Left cardiac atrium (tissue), 4 donors: ENCODE measurements at regions of chr9 and their contacts with region 1.

Region 1: DNA sequence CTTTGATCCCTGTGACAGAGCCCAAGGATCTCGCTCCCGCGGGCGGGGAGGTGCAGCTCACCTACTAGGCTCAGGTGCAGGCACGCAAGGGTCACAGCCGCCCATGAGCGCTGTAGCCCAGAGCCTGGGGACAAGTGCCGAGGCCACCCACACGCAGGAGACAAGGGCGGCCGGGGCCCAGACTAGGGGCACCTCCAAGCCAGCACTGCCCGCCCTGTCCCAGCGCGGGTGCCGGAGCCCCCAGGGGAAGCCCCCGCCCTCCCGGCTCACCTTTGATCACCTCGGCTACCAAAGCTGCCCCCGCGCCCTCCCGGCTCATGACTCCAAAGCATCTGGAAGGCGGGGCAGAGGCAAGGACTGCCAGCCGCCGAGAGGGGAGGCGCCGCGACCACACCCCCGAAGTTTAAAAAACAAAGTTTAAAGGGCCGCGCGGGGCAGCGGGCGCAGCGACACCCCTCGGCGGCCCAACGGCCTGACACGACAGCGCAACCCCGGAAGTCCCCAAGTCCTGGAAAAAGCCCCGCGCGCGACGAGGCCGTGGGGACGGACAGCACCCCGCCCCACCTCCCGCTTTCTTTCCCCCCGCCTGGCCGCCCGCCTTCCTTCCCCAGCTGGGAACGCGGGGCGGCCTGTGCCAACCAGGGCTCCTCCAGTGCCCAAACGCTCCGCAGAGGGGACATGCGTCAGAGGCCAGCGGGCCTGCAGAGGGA is 53.0 kb downstream of the CDC14B start:
- DNase-seq: peak; percentile 81
- ATAC-seq: peak; percentile 90 to 95

Region 2: GRCh38 chr9:96486368-96487028 is 80.2 kb before region 1 on chr9:
- intact Hi-C with region 1: loop called in 1 of 2 experiments (anchors 10 kb)
- DNase-seq: peak; percentile 60
- ATAC-seq: peak; percentile 76 to 90

Region 3: GRCh38 chr9:96500696-96501632 is 65.7 kb before region 1 on chr9:
- intact Hi-C with region 1: no loop called
- DNase-seq: no peak
- ATAC-seq: no peak

Region 4: GRCh38 chr9:96604004-96604319 is 37.3 kb after region 1 on chr9:
- intact Hi-C with region 1: loop called in 1 of 2 experiments (anchors 5 kb)
- DNase-seq: peak; percentile 29
- ATAC-seq: peak; percentile 75 to 95

Region 5: GRCh38 chr9:96654443-96655197 is 88.0 kb after region 1 on chr9:
- intact Hi-C with region 1: loop called in 1 of 2 experiments (anchors 10 kb)
- DNase-seq: peak; percentile 93
- ATAC-seq: peak; percentile 88 to 91

Region 6: DNA sequence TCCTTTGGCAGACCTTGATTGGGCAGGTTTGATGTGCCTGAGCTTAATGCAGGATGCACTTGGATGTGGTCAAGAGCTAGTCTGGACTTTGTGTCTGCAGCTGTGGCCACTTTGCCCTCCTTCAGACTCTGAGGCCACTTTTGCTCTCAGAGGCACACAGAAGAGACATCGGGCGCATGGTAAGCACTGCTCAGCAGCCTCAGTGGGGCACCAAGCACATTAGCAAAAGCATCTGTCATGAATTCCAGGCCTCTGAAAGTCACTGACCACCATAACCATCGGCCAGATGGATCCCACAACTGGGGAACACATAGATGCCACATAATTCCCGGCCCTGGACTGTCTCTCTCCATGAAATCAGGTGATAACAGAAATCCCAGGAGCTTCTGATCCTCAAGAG is 321.9 kb after region 1 on chr9:
- intact Hi-C with region 1: no loop called
- DNase-seq: no peak
- ATAC-seq: no peak